Gastrocnemius medialis (tissue), 4 donors: ENCODE measurements at regions of chr14 and their contacts with region 1.

Region 1: DNA sequence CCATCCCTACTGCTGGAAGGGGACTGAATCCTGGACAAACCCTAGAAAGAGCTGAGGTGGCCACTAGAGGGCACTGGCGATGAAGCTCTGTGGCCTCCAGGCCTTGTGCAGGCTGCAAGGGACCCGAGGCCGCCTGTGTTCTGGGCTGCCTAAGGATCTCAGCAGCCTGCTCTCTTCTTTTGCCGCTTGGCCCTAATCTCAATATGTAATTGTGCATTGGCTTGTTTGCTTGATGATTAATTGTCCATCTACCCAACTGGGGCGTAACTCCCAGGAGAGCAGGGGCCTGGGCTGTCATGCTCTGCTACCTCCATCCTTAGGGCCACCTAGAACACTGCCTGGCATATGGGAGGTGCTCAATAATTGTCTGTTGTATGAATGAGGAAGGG is 73.8 kb downstream of the SYNE3 start:
- DNase-seq: peak; percentile 55 to 75
- ATAC-seq: peak; percentile 92 to 99
- H3K4me3 ChIP-seq: no peak overlapping the region
- H3K27ac ChIP-seq: no peak overlapping the region
- H3K4me1 ChIP-seq: no peaks in the 10 kb centered on the region
- H3K27me3 ChIP-seq: no peaks in the 10 kb centered on the region
- CTCF ChIP-seq: peak; percentile 70 to 89 (median 84)
- POLR2A ChIP-seq: no peak

Region 2: GRCh38 chr14:94689218-94689984 is 753.2 kb before region 1 on chr14:
- in situ Hi-C with region 1: loop called in 2 of 4 experiments (anchors 25 kb)
- intact Hi-C with region 1: no loop called
- DNase-seq: peak in 1 of 2 donors; percentile 23
- ATAC-seq: peak; percentile 77 to 78
- H3K4me3 ChIP-seq: no peak overlapping the region
- H3K27ac ChIP-seq: no peak overlapping the region
- H3K4me1 ChIP-seq: peaks cover 0 to 3% of the 10 kb centered on the region in 2 donors
- H3K27me3 ChIP-seq: no peaks in the 10 kb centered on the region
- CTCF ChIP-seq: peak; percentile 77 to 94 (median 79)
- POLR2A ChIP-seq: no peak

Region 3: DNA sequence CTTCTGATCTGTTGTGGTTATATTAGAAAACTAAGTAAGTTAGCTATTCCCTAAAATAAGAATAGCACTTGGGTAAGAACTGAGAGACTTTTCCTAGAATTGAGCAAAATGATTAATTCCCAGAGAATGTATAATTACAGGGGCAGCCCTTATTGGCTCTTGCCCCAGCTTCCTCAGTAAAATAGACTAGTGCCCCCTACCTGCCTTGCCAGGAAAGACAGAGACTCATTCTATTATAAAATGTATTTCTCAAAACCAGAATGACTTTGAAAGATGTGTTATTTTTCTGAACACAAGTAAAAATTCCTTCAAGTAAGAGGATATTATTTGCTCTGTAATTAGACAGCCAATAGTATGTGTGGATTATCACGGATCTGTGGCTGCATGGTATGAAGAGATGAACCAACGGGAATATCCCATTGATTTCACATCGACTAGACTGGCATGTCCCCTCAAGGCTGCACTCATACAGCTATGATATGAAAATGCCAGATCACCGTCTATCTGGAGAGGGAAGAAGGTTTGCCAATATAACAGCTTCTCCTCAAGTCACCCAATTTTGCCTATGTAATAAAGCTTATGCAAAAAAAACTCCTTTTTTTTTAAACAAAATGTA is 84.9 kb after region 1 on chr14:
- in situ Hi-C with region 1: loop called (anchors 5 kb)
- intact Hi-C with region 1: loop called (anchors 1 kb)
- DNase-seq: peak in 1 of 2 donors; percentile 45
- ATAC-seq: peak; percentile 34 to 53
- H3K4me3 ChIP-seq: no peak overlapping the region
- H3K27ac ChIP-seq: peak overlapping the region; percentile 15 to 63 (median 52)
- H3K4me1 ChIP-seq: peaks cover 65 to 67% of the 10 kb centered on the region in 2 donors
- H3K27me3 ChIP-seq: no peaks in the 10 kb centered on the region
- CTCF ChIP-seq: peak; percentile 67 to 77 (median 73)
- POLR2A ChIP-seq: no peak

Region 4: GRCh38 chr14:95620659-95621059 is 178.0 kb after region 1 on chr14:
- in situ Hi-C with region 1: no loop called
- intact Hi-C with region 1: no loop called
- DNase-seq: no peak
- ATAC-seq: no peak
- H3K4me3 ChIP-seq: no peak overlapping the region
- H3K27ac ChIP-seq: no peak overlapping the region
- H3K4me1 ChIP-seq: no peaks in the 10 kb centered on the region
- H3K27me3 ChIP-seq: no peaks in the 10 kb centered on the region
- CTCF ChIP-seq: no peak
- POLR2A ChIP-seq: no peak

Region 5: GRCh38 chr14:95683793-95684192 is 241.2 kb after region 1 on chr14:
- in situ Hi-C with region 1: loop called in 1 of 4 experiments (anchors 25 kb)
- intact Hi-C with region 1: loop called (anchors 10 kb)
- DNase-seq: no peak
- ATAC-seq: peak in 1 of 2 donors; percentile 51
- H3K4me3 ChIP-seq: no peak overlapping the region
- H3K27ac ChIP-seq: no peak overlapping the region
- H3K4me1 ChIP-seq: no peaks in the 10 kb centered on the region
- H3K27me3 ChIP-seq: no peaks in the 10 kb centered on the region
- CTCF ChIP-seq: peak in 4 of 5 experiments; percentile 39 to 63 (median 56)
- POLR2A ChIP-seq: no peak